Activated T-helper 1 cell treated with anti-CD3 and anti-CD28 coated beads, Interleukin-12 subunit alpha, Interleukin-12 subunit beta, Interleukin-2, Interleukin-4 antibody, amounts not matched to agents 30 ng/mL and 10 ng/mL and 1 ng/mL, durations not matched to agents 14 hours and 24 hours and 36 hours (primary cell): ENCODE measurements at regions of chr11 and their contacts with region 1.

Region 1: DNA sequence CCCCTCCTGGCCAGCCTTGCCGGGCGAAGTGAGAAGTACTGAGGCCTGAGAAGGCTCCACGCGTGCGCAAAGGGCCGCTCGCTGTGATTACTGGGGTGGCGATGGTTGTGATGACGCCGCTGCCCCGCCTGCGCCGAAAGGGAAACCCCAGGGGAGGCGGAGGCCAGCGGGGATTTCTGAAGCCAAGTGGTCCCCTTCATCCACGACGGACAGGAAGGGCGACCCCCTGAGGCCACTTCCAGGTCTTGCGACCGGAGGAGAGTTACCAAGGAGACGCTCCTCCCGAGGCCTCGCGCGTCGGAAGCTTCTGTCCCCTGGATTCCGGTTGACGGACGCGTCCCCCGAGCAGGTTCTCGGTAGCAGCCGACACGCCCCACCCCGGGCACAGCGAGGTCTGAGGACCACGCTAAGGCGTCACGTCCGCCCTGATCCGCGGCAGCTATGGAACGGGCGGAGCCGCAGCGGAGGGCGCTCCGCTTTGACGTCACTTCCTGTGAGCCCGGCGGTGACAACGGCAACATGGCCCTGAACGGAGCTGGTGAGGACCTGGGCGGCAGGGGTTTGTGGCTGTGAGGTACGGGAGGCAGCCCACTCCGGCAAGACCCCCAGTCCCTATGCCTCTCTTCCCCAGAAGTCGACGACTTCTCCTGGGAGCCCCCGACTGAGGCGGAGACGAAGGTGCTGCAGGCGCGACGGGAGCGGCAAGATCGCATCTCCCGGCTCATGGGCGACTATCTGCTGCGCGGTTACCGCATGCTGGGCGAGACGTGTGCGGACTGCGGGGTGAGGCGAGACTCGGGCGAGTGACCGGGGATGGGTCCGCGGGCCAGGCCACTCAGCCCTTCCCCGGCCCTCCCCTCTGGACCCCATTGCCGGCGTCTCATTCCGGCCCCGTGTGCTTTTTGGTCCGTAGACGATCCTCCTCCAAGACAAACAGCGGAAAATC is at the start of gene ZNRD2:
- DNase-seq: peak; percentile 99
- H3K4me3 Mint-ChIP-seq: peak within 1 kb of the TSS; percentile 99
- H3K27ac Mint-ChIP-seq: peak within 1 kb of the TSS; percentile 98
- H3K4me1 Mint-ChIP-seq: peaks cover 64% of the 10 kb centered on the region
- H3K27me3 Mint-ChIP-seq: no peaks in the 10 kb centered on the region
- total RNA-seq, gene ZNRD2: 94.6 and 96.9 TPM in 2 replicates

Region 2: GRCh38 chr11:65027213-65028067 is 542.8 kb before region 1 on chr11 and contains the start of gene SNX15:
- intact Hi-C with region 1: loop called (anchors 1 kb)
- DNase-seq: peak; percentile 91
- H3K4me3 Mint-ChIP-seq: peak within 1 kb of the TSS; percentile 83
- H3K27ac Mint-ChIP-seq: peak within 1 kb of the TSS; percentile 83
- H3K4me1 Mint-ChIP-seq: peaks cover 23% of the 10 kb centered on the region
- H3K27me3 Mint-ChIP-seq: no peaks in the 10 kb centered on the region
- total RNA-seq, gene SNX15: 19.9 and 30.9 TPM in 2 replicates

Region 3: GRCh38 chr11:65382033-65382807 is 188.0 kb before region 1 on chr11 and contains the start of gene SLC25A45:
- intact Hi-C with region 1: loop called (anchors 1 kb)
- DNase-seq: peak; percentile 87
- H3K4me3 Mint-ChIP-seq: peak within 1 kb of the TSS; percentile 92
- H3K27ac Mint-ChIP-seq: peak within 1 kb of the TSS; percentile 99
- H3K4me1 Mint-ChIP-seq: peaks cover 34% of the 10 kb centered on the region
- H3K27me3 Mint-ChIP-seq: no peaks in the 10 kb centered on the region
- total RNA-seq, gene SLC25A45: 15.3 and 19.4 TPM in 2 replicates

Region 4: GRCh38 chr11:65497141-65498041 is 72.9 kb before region 1 on chr11:
- intact Hi-C with region 1: loop called (anchors 2 kb)
- DNase-seq: peak; percentile 98
- H3K4me3 Mint-ChIP-seq: no peak overlapping the region
- H3K27ac Mint-ChIP-seq: no peak overlapping the region
- H3K4me1 Mint-ChIP-seq: peaks cover 37% of the 10 kb centered on the region
- H3K27me3 Mint-ChIP-seq: no peaks in the 10 kb centered on the region

Region 5: GRCh38 chr11:65559951-65560537 is 10.2 kb before region 1 on chr11:
- intact Hi-C with region 1: loop called (anchors 1 kb)
- DNase-seq: no peak
- H3K4me3 Mint-ChIP-seq: no peak overlapping the region
- H3K27ac Mint-ChIP-seq: peak overlapping the region; percentile 64
- H3K4me1 Mint-ChIP-seq: peaks cover 53% of the 10 kb centered on the region
- H3K27me3 Mint-ChIP-seq: no peaks in the 10 kb centered on the region